GM10248 (cell line): ENCODE measurements at regions of chr6 and their contacts with region 1.

Region 1: DNA sequence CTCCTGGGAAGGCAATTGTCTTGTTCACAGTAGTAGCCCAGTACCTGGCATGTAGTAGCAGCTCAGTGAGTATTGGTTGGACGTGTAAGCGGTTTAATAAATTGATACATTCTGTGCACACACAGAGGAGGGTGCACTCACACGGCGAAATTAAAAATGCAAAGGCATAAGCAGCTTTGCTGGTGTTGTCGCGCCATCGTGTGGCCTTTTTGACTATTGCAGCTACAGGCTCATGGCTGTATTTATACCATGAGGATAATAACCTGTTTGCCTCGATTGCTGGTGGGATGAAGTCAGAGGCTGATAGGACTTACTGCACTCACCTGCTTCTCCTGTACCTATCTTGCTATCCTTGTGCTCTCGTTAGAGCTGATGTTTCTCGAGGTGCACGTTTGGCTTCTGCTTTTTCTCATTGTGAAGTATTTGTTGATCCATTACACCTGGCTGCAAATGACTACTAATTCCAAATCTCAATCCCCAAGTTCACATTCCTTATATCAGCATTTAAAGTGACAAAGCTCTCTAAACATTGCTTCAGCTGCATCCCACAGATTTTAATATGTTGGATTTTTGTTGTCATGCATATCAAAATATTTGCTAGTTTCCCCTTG is 61.5 kb downstream of the TBXT start:
- DNase-seq: peak; percentile 53
- CTCF ChIP-seq: peak; percentile 86

Region 2: DNA sequence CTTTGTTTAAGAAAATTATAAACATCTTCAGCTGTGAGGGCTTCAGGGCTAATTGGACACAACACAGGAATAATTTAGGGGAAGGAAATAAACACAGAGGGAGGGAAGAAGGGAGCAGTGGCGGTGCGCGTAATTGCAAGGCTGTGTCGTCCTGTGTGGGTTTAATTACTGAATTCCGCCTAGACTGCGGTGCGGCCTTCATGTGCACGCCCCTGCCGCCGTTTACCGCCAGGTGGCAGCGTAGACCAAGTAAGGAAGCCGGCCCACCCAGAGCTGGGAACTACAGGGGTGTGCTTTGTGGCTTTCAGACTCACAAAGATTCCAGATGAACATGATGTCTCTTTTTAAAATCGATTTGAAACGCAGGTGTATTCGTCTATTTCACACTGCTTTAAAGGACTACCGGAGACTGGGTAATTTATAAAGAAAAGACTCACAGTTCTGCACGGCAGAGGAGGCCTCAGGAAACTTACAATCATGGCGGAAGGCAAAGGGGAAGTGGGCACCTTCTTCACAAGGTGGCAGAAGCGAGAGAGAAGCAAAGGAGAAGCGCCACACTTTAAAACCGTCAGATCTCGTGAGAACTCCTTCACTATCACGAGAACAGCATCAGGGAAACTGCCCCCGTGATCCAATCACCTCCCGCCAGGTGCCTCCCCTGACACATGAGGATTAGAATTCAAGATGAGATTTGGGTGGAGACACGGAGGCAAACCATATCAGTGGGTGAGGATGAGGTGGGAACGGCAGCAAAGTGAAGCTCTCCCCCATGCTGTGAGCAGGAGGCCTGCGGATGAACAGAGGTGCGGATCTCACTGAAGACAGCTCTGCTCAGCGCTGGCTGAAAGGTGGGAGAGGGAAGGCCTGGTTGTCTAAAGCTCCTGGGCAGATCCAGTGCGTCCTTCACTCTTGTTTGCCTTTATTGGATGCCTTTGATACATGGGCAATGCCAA is 221.1 kb before region 1 on chr6:
- CTCF ChIA-PET with region 1: interaction called, 67 read pairs
- POLR2A ChIA-PET with region 1: no interaction called
- DNase-seq: peak; percentile 64
- CTCF ChIP-seq: peak; percentile 84

Region 3: DNA sequence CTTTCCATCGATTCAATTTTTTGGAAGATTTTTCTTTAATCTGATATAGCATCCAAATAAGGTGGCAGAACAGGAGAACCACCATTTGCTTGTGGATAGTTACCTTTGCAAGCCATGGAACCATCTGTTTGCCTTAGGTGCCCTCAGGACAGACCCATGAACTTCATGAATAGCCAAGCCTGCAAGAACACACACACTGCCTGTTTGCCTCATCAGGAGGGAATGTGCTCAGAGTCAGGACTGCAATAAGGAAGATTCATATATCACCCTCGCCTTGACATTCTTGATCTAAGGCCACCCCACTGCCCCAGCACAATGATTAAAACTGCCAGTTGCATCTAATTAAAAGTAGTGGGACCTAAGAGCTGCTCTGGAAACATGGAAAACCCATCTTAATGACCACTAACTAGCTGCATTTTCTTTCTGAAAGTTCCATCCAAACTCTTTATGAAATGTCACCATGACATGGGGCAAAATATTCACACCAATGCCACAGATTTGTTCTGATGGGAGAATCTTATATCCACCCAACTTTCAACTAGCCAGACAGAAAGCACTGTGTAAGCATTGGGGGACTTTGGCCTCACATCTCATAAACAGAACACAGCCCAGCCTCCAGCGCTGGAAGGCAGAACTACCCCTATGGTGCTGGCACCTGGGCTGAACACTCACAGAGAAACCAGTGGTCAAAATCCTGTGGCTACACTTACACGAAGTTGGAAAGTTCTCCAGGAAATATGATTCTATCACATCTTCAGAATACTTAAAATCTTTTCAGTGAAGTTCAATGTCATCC is 13.1 kb after region 1 on chr6:
- CTCF ChIA-PET with region 1: interaction called, 12 read pairs
- POLR2A ChIA-PET with region 1: no interaction called
- DNase-seq: no peak
- CTCF ChIP-seq: no peak